ENCODE measurements at regions of chr7 and their contacts with region 1.

Region 1: GRCh38 chr7:128343554-128344430 is at the start of gene RBM28:
- DNase-seq: peak; percentile 91
- ATAC-seq: peak; percentile 96
- H3K4me3 Mint-ChIP-seq: peak within 1 kb of the TSS; percentile 98
- H3K27ac Mint-ChIP-seq: peak within 1 kb of the TSS; percentile 92
- H3K4me1 Mint-ChIP-seq: peaks cover 27% of the 10 kb centered on the region
- H3K27me3 Mint-ChIP-seq: peaks cover 11% of the 10 kb centered on the region
- total RNA-seq, gene RBM28: 52.6 to 53.6 TPM

Region 2: DNA sequence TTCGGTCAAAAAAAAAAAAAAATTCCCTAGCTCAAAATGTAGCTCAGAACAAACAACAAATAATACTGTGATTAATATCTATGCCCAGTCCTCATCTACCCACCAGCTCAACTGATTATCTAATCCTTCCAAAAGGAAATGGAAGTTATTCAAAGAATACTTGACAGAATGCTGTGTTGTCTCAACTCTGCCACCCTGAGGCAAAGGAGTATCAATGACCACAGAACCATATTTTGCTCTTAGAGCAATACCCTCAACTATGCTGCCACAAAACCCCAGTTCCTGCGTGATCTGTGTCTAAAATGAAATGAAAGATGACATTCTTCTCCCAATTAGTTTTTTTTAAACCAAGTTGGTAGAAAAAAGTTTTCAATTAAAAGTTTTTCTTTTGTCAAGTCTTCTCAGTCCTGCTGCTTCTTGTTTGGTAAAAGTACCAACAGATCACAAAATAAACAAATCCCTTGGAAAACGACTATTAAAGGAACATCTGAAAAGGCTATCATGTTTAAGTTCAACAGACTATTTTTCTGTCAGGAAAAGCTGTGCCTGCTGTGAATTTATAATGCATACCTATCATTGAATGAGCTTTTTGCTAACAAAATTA is 21.6 kb before region 1 on chr7:
- CTCF ChIA-PET with region 1: interaction called, 18 read pairs
- DNase-seq: peak; percentile 71
- ATAC-seq: peak; percentile 63
- H3K4me3 Mint-ChIP-seq: peak overlapping the region; percentile 35
- H3K27ac Mint-ChIP-seq: peak overlapping the region; percentile 99
- H3K4me1 Mint-ChIP-seq: peaks cover 43% of the 10 kb centered on the region
- H3K27me3 Mint-ChIP-seq: no peaks in the 10 kb centered on the region

Region 3: DNA sequence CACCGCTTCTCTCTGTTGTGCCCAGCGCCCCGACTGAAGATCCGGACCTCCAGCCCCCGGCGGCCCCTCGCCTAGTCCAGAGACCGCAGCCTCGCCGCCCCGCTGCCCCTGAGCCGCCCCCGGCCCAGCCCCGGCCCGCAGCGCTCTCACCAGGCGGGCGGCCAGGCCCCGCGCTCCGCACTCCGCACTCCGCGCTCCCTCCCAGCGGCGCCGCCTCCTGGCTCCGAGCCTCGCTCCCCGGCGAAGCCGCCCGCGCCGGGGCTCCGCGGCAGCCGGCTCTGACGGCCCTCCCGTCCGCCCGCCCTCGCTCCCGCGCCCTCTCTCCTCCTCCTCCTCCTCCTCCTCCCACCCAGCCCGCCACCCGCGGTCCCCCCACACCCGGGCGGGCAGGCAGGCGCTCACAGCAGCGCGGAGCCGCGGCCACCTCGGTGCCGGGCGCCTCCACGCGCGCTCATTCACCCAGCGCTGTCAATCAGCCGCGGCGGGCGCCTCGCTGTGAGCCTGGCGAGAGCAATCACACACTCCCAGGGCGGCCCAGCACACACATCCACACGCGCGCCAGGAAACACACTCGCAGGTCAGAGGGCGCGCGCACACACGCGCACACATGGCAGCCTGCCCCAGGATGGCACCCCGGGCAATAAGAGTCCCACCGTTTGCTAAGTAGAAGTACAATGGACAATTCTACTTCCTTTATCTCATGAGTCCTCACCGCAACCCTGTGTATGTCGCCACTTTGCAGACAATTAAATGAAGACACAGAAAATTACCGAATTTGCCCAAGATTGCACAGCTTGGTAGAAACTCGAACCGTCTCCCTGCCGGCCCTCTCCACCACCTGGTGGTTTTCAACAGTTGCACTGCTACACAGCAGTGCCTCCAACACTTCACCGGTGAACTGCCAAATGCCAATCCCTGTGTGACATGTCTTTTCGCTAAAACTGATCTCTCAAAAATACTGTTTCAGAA is 17.9 kb after region 1 on chr7 and contains the start of gene PRRT4:
- CTCF ChIA-PET with region 1: interaction called, 20 read pairs
- DNase-seq: no peak
- ATAC-seq: peak; percentile 79
- H3K4me3 Mint-ChIP-seq: peak within 1 kb of the TSS; percentile 53
- H3K27ac Mint-ChIP-seq: no peak within 1 kb of the TSS
- H3K4me1 Mint-ChIP-seq: peaks cover 18% of the 10 kb centered on the region
- H3K27me3 Mint-ChIP-seq: peaks cover 81% of the 10 kb centered on the region
- total RNA-seq, gene PRRT4: 0.18 TPM in 1 of 2 experiments, not detected in the other

Region 4: DNA sequence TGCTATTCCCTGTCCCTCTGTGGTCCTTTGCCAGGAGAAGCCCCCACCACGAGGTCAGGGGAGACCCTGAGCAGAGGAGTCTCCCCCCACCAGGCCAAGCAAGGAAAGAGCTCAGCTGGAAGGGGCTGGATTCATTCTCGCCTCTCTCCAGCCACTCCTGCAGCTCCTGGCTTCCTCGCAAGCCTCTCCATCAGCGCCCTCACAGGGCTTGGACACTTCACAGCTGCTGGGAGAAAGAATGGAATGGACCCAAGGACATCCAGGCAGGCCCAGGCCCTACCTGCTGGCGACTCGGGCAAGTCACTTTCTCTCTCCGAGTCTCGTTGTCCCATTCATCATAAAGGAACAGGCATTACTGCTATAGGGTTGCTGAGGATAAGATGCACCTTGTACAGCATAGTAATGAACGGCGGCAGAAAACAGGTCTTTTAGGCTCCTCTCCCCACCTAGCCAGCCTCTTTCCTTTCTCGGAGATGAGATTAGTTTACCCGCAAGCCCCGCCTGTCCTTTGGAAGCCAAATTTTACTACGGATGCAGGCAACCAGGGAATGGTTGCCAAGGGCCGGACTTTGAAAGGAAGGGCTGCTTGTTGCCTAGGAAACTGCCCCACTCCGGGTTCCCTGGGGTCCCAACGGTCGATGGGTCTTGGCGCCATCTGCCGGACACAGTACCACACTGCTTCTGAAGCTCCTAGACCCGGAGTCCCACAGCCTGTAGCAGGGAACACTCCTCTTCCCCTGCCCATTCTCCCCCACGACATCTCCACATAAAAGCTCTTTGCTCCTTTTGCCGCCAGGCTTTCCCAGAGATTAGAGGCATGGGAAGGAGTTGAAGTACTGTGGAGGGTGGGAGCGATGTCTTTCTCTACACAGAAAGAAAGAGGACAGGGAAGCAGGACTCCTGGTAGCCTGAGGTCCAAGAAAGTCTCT is 43.7 kb after region 1 on chr7:
- CTCF ChIA-PET with region 1: interaction called, 191 read pairs
- DNase-seq: peak; percentile 77
- ATAC-seq: peak; percentile 94
- H3K4me3 Mint-ChIP-seq: no peak overlapping the region
- H3K27ac Mint-ChIP-seq: no peak overlapping the region
- H3K4me1 Mint-ChIP-seq: no peaks in the 10 kb centered on the region
- H3K27me3 Mint-ChIP-seq: no peaks in the 10 kb centered on the region

Region 5: GRCh38 chr7:128425850-128426249 is 82.1 kb after region 1 on chr7:
- CTCF ChIA-PET with region 1: interaction called, 35 read pairs
- DNase-seq: peak; percentile 84
- ATAC-seq: peak; percentile 60
- H3K4me3 Mint-ChIP-seq: no peak overlapping the region
- H3K27ac Mint-ChIP-seq: no peak overlapping the region
- H3K4me1 Mint-ChIP-seq: peaks cover 26% of the 10 kb centered on the region
- H3K27me3 Mint-ChIP-seq: peaks cover 9% of the 10 kb centered on the region

Region 6: DNA sequence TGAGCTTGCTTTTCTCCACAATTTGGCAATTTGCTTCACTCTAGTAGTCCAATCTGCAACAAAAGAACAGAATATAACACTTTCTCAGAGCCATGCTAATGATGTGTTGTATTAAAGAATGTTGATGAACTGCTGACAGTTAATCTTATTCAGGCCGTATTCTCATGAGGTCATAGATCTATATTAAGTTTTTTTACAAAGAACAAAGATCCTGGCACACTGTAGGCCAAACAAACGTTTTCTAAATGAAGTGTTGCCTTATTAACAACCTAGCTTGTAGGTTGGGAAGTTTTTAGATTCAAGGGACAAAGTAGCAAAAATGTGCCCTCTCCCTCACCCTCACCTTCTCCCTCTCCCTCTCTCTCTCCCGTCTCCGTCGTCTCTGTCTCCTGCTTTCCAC is 118.7 kb after region 1 on chr7:
- CTCF ChIA-PET with region 1: interaction called, 16 read pairs
- DNase-seq: no peak
- ATAC-seq: no peak
- H3K4me3 Mint-ChIP-seq: no peak overlapping the region
- H3K27ac Mint-ChIP-seq: no peak overlapping the region
- H3K4me1 Mint-ChIP-seq: peaks cover 24% of the 10 kb centered on the region
- H3K27me3 Mint-ChIP-seq: no peaks in the 10 kb centered on the region

Measured in activated CD8-positive, alpha-beta memory T cell treated with anti-CD3 and anti-CD28 coated beads, Interleukin-2, amount 10 ng/mL, durations not matched to agents 7 days and 5 days (primary cell).